ENCODE measurements at regions of chr7 and their contacts with region 1.

Region 1: GRCh38 chr7:43700059-43700501 is 29.2 kb downstream of the COA1 start:
- DNase-seq: peak in 2 of 35 experiments; percentile 8 to 77
- ATAC-seq: peak; percentile 64 to 73 (median 67)
- H3K4me3 ChIP-seq: no peak overlapping the region
- H3K4me3 Mint-ChIP-seq: peak overlapping the region in 2 of 3 donors; percentile 46 to 52
- H3K27ac ChIP-seq: no peak overlapping the region
- H3K27ac Mint-ChIP-seq: peak overlapping the region; percentile 36 to 79
- H3K4me1 ChIP-seq: peaks cover 12 to 26% of the 10 kb centered on the region in 2 experiments
- H3K4me1 Mint-ChIP-seq: peaks cover 47 to 49% (median 48%) of the 10 kb centered on the region in 3 donors
- H3K27me3 ChIP-seq: no peaks in the 10 kb centered on the region
- H3K27me3 Mint-ChIP-seq: no peaks in the 10 kb centered on the region

Region 2: GRCh38 chr7:43590862-43591550 is 109.1 kb before region 1 on chr7:
- CTCF ChIA-PET with region 1: interaction called, 152 to 548 read pairs
- POLR2A ChIA-PET with region 1: interaction called, 6 to 11 read pairs
- DNase-seq: no peak
- ATAC-seq: no peak
- H3K4me3 ChIP-seq: no peak overlapping the region
- H3K4me3 Mint-ChIP-seq: peak overlapping the region; percentile 62 to 96 (median 69)
- H3K27ac ChIP-seq: peak overlapping the region; percentile 95
- H3K27ac Mint-ChIP-seq: peak overlapping the region; percentile 80 to 86
- H3K4me1 ChIP-seq: peaks cover 46 to 79% of the 10 kb centered on the region in 2 experiments
- H3K4me1 Mint-ChIP-seq: peaks cover 83 to 89% (median 84%) of the 10 kb centered on the region in 3 donors
- H3K27me3 ChIP-seq: no peaks in the 10 kb centered on the region
- H3K27me3 Mint-ChIP-seq: no peaks in the 10 kb centered on the region

Region 3: GRCh38 chr7:43625453-43625852 is 74.6 kb before region 1 on chr7:
- CTCF ChIA-PET with region 1: interaction called, 3 to 28 read pairs
- POLR2A ChIA-PET with region 1: interaction called, 3 read pairs
- DNase-seq: peak in 33 of 35 experiments; percentile 33 to 83 (median 69)
- ATAC-seq: peak; percentile 64 to 74 (median 73)
- H3K4me3 ChIP-seq: no peak overlapping the region
- H3K4me3 Mint-ChIP-seq: peak overlapping the region; percentile 29 to 55 (median 52)
- H3K27ac ChIP-seq: peak overlapping the region; percentile 76
- H3K27ac Mint-ChIP-seq: peak overlapping the region; percentile 85 to 87
- H3K4me1 ChIP-seq: peaks cover 45 to 82% of the 10 kb centered on the region in 2 experiments
- H3K4me1 Mint-ChIP-seq: peaks cover 62 to 91% (median 91%) of the 10 kb centered on the region in 3 donors
- H3K27me3 ChIP-seq: no peaks in the 10 kb centered on the region
- H3K27me3 Mint-ChIP-seq: no peaks in the 10 kb centered on the region

Region 4: DNA sequence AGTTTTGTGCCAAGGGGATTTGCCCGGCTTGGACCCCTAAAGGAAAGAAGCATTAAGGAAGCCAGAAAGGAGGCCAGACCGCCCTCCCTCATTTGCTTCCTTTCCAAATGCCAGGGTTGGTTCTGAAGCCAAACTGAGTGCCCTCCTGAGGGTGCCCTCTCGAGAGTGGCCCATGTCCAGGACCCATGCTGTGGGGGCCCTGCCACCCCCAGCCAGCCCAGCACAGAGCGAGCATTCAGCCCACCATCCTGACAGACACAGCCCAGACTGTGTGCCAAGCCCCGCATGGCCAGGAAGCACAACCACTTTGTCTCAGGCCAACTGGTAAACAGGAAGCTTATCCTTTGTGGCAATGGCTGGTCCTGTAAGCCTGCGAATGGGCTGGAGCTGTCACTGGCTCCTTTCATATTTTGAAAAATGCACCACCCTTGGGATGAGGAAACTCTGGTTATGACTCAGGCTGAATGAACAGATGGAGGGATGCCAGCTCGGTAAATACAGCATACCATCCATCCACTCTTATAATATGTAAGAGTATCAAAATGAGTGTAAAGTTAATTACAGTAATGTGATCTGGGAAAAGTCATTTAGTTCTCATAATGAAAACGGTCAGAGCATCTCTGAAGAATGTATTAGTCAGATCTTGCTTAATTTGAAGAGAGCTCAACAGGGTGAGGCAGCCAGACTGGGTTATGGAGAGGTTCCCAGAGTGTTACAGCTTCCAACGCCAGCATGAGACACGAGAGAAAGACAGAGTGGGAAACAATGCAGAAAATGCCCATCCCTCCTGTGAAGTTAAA is 52.2 kb before region 1 on chr7:
- CTCF ChIA-PET with region 1: interaction called, 11 to 54 read pairs
- POLR2A ChIA-PET with region 1: interaction called in 1 of 2 experiments, 22 read pairs
- DNase-seq: peak in 6 of 35 experiments; percentile 21 to 61 (median 48)
- ATAC-seq: peak; percentile 2 to 17 (median 6)
- H3K4me3 ChIP-seq: peak overlapping the region; percentile 51 to 53
- H3K4me3 Mint-ChIP-seq: peak overlapping the region; percentile 69 to 78 (median 76)
- H3K27ac ChIP-seq: peak overlapping the region; percentile 95
- H3K27ac Mint-ChIP-seq: peak overlapping the region; percentile 99 to 100
- H3K4me1 ChIP-seq: peaks cover 72 to 97% of the 10 kb centered on the region in 2 experiments
- H3K4me1 Mint-ChIP-seq: peaks cover 96 to 99% (median 97%) of the 10 kb centered on the region in 3 donors
- H3K27me3 ChIP-seq: no peaks in the 10 kb centered on the region
- H3K27me3 Mint-ChIP-seq: no peaks in the 10 kb centered on the region

Region 5: GRCh38 chr7:43686991-43687390 is 13.1 kb before region 1 on chr7:
- CTCF ChIA-PET with region 1: interaction called, 5 to 10 read pairs
- POLR2A ChIA-PET with region 1: interaction called in 1 of 2 experiments, 6 read pairs
- DNase-seq: no peak
- ATAC-seq: no peak
- H3K4me3 ChIP-seq: no peak overlapping the region
- H3K4me3 Mint-ChIP-seq: no peak overlapping the region
- H3K27ac ChIP-seq: no peak overlapping the region
- H3K27ac Mint-ChIP-seq: no peak overlapping the region
- H3K4me1 ChIP-seq: peaks cover 15 to 19% of the 10 kb centered on the region in 2 experiments
- H3K4me1 Mint-ChIP-seq: peaks cover 66 to 77% (median 66%) of the 10 kb centered on the region in 3 donors
- H3K27me3 ChIP-seq: no peaks in the 10 kb centered on the region
- H3K27me3 Mint-ChIP-seq: no peaks in the 10 kb centered on the region

Region 6: GRCh38 chr7:43834463-43835251 is 134.6 kb after region 1 on chr7:
- CTCF ChIA-PET with region 1: interaction called, 9 to 10 read pairs
- POLR2A ChIA-PET with region 1: no interaction called
- DNase-seq: peak in 21 of 35 experiments; percentile 2 to 76 (median 10)
- ATAC-seq: peak; percentile 36 to 54 (median 50)
- H3K4me3 ChIP-seq: peak overlapping the region; percentile 25 to 66
- H3K4me3 Mint-ChIP-seq: peak overlapping the region; percentile 71 to 88 (median 83)
- H3K27ac ChIP-seq: peak overlapping the region; percentile 87
- H3K27ac Mint-ChIP-seq: peak overlapping the region; percentile 93 to 96
- H3K4me1 ChIP-seq: peaks cover 3 to 20% of the 10 kb centered on the region in 2 experiments
- H3K4me1 Mint-ChIP-seq: peaks cover 19 to 24% (median 22%) of the 10 kb centered on the region in 3 donors
- H3K27me3 ChIP-seq: peaks cover 0 to 4% of the 10 kb centered on the region in 2 experiments
- H3K27me3 Mint-ChIP-seq: peaks cover under 1 to 4% of the 10 kb centered on the region in 2 donors